ENCODE measurements at regions of chr2 and their contacts with region 1.

Region 1: DNA sequence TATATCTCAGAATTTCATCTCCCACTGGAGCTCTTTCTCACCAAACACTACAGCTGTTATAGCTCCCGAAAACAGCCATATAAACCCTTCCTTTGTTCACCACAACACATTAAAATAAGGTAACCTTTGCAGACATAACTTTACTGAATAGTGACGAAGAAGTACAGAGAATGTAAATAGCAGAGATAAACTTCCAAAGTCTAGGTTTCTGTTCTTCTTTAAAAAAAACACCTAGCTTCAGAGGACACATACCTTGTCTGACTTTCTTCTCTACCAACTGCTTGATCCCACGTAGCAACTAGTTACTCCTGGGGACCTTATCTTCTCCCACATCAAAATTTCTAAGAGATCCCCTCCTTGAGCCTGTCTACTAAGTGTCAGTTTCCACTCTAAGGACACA is 32.3 kb downstream of the ATL2 start:
- DNase-seq: no peak
- H3K4me3 ChIP-seq: no peak overlapping the region
- H3K27ac ChIP-seq: no peak overlapping the region
- H3K4me1 ChIP-seq: no peaks in the 10 kb centered on the region
- H3K27me3 ChIP-seq: no peaks in the 10 kb centered on the region
- CTCF ChIP-seq: no peak

Region 2: DNA sequence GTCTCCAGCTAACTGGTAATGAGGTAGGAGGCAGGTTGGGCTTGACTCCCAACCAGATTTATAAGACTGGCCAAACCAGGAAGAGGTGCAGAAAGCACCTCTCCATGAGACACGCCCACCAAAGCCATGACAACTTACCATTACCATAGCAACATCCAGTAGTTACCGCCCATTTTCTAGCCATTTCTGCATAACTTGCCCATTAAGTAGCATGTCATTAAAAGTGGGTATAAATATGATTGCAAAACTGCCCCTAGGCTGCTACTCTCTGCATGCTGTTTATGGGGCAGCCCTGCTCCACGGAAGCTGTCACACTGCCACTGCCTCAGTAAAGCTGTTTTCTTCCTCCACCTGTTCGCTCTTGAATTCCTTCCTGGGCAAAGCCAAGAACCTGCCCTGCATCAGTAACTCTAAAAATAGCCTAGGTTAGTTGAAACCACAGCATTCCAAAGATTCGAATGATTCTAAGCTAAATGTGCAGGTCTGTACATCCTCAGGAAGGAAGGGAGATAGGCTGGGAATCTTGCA is 99.6 kb before region 1 on chr2:
- dilution Hi-C with region 1: no loop called
- DNase-seq: no peak
- H3K4me3 ChIP-seq: no peak overlapping the region
- H3K27ac ChIP-seq: no peak overlapping the region
- H3K4me1 ChIP-seq: peaks cover 15% of the 10 kb centered on the region
- H3K27me3 ChIP-seq: no peaks in the 10 kb centered on the region
- CTCF ChIP-seq: no peak

Region 3: GRCh38 chr2:38508311-38509039 is 163.7 kb after region 1 on chr2:
- dilution Hi-C with region 1: loop called (anchors 25 kb)
- DNase-seq: peak; percentile 35
- H3K4me3 ChIP-seq: no peak overlapping the region
- H3K27ac ChIP-seq: no peak overlapping the region
- H3K4me1 ChIP-seq: peaks cover 13% of the 10 kb centered on the region
- H3K27me3 ChIP-seq: no peaks in the 10 kb centered on the region
- CTCF ChIP-seq: peak; percentile 45 to 74 (median 72)

Region 4: DNA sequence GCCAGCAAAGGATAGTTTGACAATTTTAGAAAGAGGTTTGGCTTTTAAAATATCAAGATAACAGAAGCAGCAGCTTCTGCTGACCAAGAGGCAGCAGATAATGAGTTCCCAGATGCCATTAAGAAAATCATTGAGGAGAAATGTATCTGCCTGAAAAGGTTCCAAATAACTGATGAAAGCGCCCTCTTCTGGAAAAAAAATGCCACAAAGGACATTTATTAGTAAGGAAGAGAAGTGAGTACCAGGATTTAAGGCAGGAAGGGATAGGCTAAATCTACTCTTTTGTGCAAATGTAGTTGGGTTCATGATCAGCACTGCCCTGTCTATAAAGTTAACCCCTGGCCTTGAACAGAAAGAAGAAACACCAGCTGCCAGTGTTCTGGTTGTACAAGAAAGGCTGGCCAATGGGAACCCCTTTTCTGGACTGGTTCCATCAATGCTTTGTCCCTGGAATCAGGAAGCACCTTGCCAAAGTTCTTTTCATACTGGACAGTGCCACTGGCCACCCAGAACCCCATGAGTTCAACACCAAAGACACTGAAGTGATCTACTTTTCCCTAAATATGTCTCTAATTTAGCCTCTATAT is 490.3 kb after region 1 on chr2:
- dilution Hi-C with region 1: no loop called
- DNase-seq: no peak
- H3K4me3 ChIP-seq: no peak overlapping the region
- H3K27ac ChIP-seq: no peak overlapping the region
- H3K4me1 ChIP-seq: no peaks in the 10 kb centered on the region
- H3K27me3 ChIP-seq: no peaks in the 10 kb centered on the region
- CTCF ChIP-seq: peak in 2 of 3 experiments; percentile 27 to 35

Measured in keratinocyte (primary cell).